ENCODE measurements at regions of chr17 and their contacts with region 1.

Region 1: DNA sequence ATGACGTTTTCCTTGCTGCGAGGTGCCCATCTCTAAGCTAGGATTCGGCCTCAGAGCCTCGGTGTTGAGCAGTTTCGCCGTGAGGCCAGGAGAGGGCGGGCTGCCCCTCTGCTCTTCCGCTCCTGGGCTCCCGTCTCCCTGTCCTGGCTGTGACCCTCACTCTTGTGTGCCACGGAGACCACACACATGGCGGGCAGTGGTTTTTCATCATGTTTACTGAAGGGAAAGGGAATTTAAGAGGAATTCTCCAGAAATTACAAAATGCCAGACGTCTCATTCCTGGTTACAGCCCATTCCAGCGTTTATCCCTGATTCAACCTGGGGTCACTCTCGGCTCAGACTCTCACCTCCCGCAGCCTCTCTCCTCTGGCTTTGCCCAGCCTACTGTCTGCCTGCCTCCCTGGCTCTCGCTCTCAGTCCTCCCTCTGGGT is 96.8 kb upstream of the ELAC2 start:
- DNase-seq: peak; percentile 55
- H3K4me3 Mint-ChIP-seq: no peak overlapping the region
- H3K27ac Mint-ChIP-seq: no peak overlapping the region
- H3K4me1 Mint-ChIP-seq: no peaks in the 10 kb centered on the region
- H3K27me3 Mint-ChIP-seq: peaks cover 64% of the 10 kb centered on the region
- CTCF ChIP-seq: peak; percentile 80

Region 2: GRCh38 chr17:12983991-12984884 is 130.4 kb before region 1 on chr17:
- CTCF ChIA-PET with region 1: no interaction called
- POLR2A ChIA-PET with region 1: no interaction called
- intact Hi-C with region 1: no loop called
- DNase-seq: peak; percentile 35
- H3K4me3 Mint-ChIP-seq: no peak overlapping the region
- H3K27ac Mint-ChIP-seq: peak overlapping the region; percentile 42
- H3K4me1 Mint-ChIP-seq: peaks cover 10% of the 10 kb centered on the region
- H3K27me3 Mint-ChIP-seq: no peaks in the 10 kb centered on the region
- CTCF ChIP-seq: no peak

Region 3: DNA sequence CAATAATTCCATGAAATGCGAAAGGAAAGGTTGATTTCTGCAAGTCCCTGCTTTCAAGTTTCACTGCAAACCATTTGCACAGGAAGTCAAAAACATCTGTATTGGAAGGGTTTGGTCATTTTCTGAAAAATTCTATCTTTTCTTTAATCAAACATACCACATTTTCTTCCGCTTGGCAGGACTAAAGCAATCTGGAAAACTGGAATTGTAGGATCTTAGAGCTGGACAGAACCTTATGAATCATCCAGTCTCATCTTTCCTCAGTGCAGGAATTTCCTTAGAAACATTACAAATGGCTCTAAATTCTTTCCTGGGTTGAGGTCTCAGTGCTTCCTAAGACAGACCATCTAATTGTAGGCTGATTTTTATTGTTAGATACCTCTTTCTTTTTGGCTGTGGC is 14.7 kb after region 1 on chr17:
- CTCF ChIA-PET with region 1: interaction called, 10 read pairs
- POLR2A ChIA-PET with region 1: no interaction called
- intact Hi-C with region 1: no loop called
- DNase-seq: no peak
- H3K4me3 Mint-ChIP-seq: no peak overlapping the region
- H3K27ac Mint-ChIP-seq: no peak overlapping the region
- H3K4me1 Mint-ChIP-seq: no peaks in the 10 kb centered on the region
- H3K27me3 Mint-ChIP-seq: peaks cover 31% of the 10 kb centered on the region
- CTCF ChIP-seq: no peak

Region 4: DNA sequence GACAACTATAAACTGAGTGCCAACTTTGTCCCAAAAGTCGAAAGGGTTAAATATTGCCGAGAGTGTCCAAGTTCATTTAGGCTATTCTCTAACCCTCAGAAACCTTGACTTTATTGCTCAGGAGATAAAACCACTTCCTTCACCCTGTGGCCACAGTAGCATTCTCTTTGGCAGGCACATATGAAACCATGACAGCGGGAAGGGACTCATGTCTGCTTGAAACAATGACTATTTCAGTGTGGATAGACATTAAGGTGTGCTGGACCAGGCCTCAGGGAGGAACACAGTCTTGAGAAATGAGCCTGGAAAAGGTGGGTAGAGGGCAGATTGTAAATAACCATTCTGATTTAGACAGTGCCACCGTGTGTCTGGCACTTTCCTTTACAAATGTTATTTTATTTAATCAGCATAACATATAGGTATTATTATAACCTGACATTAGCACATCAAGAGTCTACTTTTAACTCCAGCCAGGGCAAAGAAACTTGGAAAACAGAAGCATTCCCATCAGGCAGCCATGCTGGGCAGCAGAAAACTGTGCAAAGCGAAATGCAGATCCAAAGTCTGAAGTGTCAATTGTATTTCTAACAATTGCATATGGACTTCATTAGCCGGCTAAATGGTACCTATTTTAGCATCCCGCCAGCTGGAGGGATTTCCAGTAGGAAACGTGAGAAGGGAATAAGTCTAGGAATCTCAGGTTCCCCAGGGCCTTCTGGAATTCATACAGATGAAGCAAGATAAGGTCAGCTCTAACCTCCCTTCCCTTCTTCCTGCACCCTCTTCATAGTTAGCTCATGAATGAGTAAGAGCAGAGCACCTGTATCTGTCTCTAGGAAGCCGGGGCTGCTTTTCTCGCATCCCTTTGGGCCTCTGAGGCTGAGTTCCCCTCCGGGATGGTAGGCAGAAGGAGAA is 116.0 kb after region 1 on chr17:
- CTCF ChIA-PET with region 1: interaction called, 7 read pairs
- POLR2A ChIA-PET with region 1: no interaction called
- intact Hi-C with region 1: loop called (anchors 1 kb)
- DNase-seq: peak; percentile 15
- H3K4me3 Mint-ChIP-seq: no peak overlapping the region
- H3K27ac Mint-ChIP-seq: no peak overlapping the region
- H3K4me1 Mint-ChIP-seq: no peaks in the 10 kb centered on the region
- H3K27me3 Mint-ChIP-seq: peaks cover 92% of the 10 kb centered on the region
- CTCF ChIP-seq: peak; percentile 11